Heart right ventricle (tissue), 16 donors: ENCODE measurements at regions of chr13 and their contacts with region 1.

Region 1: DNA sequence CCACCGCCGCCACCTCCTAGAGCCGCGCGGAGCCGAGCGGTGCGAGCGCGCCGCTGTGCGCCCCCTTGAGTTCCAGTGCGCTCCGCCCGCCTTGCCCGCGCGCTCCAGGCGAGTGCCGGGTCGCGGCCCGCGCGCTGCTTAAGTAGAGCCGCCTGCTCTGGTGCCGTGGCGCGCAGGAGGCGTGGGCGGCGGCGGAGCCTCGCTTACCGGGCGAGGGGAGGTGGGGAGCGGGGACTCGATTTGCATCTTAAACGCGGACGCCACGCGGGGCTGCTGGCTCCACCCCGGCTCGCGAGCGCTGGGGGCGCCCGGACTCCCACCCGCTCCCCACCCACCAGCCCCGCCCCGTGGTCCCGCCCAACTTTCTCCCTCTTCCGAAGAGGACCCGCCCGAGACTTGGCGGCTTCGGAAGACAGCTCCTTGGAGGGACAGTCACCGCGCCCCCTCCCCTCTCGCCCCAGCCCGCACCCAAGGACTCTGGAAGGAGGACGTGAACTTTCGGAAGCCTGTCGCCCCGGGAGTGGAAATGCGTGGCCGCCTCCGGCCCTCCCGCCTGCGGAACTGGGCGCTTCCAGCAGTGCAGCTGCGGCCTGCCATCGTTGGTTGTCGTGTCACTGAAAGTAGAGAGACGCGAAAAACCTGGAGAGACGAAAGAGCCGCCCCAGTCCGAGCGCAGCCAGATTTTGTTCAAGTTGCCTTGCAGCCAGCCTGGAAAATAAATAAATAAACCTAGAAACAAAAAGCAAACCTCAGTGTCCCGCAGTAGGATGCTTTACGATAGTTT is at the start of gene KCTD12:
- DNase-seq: peak; percentile 90 to 93
- ATAC-seq: peak; percentile 80 to 95 (median 84)
- H3K4me3 ChIP-seq: peak within 1 kb of the TSS; percentile 61 to 90 (median 84)
- H3K27ac ChIP-seq: peak within 1 kb of the TSS; percentile 88 to 97 (median 94)
- H3K4me1 ChIP-seq: peaks cover 0 to 44% (median 18%) of the 10 kb centered on the region in 9 donors
- H3K27me3 ChIP-seq: peaks cover 0 to 6% (median 0%) of the 10 kb centered on the region in 7 donors
- CTCF ChIP-seq: peak in 7 of 9 donors; percentile 20 to 67 (median 42)
- total RNA-seq, gene KCTD12: 21.0 to 56.5 (median 32.5) TPM

Region 2: DNA sequence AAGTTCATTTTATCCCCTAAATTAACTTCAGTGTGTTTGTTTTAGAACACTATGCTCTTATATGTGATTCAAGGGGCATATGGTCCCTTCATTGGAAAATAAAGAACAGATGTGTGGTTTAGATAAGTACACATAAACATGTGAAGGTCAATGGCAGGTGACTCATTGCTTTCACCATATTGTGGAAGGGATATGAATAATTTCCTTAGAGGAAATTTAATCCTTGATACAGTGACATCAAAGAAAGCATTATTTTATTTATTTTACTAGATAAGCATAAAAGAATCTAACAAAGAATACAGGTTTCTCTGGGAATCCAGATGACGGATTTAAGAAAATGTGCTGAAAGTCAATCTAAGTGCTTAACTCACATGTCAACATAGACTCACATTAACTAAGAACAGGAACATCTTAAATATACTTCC is 373.8 kb before region 1 on chr13:
- intact Hi-C with region 1: loop called in 1 of 10 experiments (anchors 5 kb)
- DNase-seq: peak in 1 of 2 donors; percentile 9
- ATAC-seq: peak; percentile 38 to 94 (median 82)
- H3K4me3 ChIP-seq: no peak overlapping the region
- H3K27ac ChIP-seq: peak overlapping the region in 4 of 10 donors; percentile 7 to 52 (median 21)
- H3K4me1 ChIP-seq: peaks cover 0 to 17% (median 0%) of the 10 kb centered on the region in 9 donors
- H3K27me3 ChIP-seq: no peaks in the 10 kb centered on the region
- CTCF ChIP-seq: no peak

Region 3: GRCh38 chr13:76667551-76667950 is 218.9 kb before region 1 on chr13:
- intact Hi-C with region 1: loop called in 4 of 10 experiments (anchors 5 kb)
- DNase-seq: peak in 1 of 2 donors; percentile 32
- ATAC-seq: peak in 7 of 8 donors; percentile 62 to 83 (median 72)
- H3K4me3 ChIP-seq: no peak overlapping the region
- H3K27ac ChIP-seq: no peak overlapping the region
- H3K4me1 ChIP-seq: peaks cover 0 to 17% (median 0%) of the 10 kb centered on the region in 9 donors
- H3K27me3 ChIP-seq: no peaks in the 10 kb centered on the region
- CTCF ChIP-seq: peak in 8 of 9 donors; percentile 18 to 66 (median 52)

Region 4: DNA sequence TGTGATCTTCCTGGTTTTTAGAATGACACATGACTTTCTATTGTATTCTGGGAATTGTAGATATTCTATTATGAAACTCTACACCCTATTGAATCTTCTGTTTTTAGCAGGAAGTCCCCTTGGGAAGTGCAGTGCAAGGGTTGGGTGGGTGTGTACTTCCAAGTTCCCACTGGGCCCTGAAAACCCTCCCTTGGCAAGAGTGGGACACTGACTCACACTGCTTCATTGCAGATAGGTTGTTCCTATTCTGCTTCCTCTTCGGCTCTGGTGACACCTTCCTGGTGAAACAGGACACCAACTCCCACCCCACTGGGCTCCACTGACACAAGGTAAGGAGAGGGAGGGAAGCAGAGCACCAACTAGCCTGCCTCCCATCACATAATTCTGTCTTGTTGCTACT is 122.1 kb before region 1 on chr13:
- intact Hi-C with region 1: loop called in 2 of 10 experiments (anchors 10 kb)
- DNase-seq: peak; percentile 32 to 86
- ATAC-seq: peak; percentile 93 to 99 (median 98)
- H3K4me3 ChIP-seq: peak overlapping the region in 7 of 10 donors; percentile 10 to 39 (median 25)
- H3K27ac ChIP-seq: peak overlapping the region; percentile 59 to 85 (median 78)
- H3K4me1 ChIP-seq: peaks cover 0 to 32% (median 25%) of the 10 kb centered on the region in 9 donors
- H3K27me3 ChIP-seq: no peaks in the 10 kb centered on the region
- CTCF ChIP-seq: no peak

Region 5: DNA sequence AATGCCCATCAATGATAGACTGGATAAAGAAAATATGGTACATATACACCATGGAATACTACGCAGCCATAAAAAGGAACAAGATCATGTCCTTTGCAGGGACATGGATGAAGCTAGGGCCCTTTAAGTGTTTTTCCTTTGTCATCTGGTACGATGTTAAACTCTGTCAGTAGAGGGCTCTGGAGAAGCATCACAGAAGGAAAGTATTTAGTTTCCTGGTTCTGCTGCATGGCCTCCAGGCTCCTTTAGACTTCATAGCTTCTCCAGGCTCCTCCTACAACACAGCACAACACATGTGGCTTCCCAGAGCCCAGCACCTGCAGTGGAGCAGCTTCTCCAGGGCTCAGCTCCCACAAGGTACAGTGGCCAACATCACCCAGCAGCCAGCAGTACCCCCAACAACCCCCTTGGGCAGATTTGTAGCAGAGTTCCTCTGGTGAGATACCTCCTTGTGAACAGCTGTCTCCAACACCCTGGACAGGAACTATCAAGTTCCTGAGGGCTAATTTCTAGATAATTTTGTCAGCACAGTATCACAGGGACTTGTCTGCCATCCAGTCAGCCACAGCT is 63.7 kb before region 1 on chr13:
- intact Hi-C with region 1: loop called in 8 of 10 experiments (anchors 2 to 10 kb)
- DNase-seq: no peak
- ATAC-seq: peak in 6 of 8 donors; percentile 30 to 71 (median 53)
- H3K4me3 ChIP-seq: no peak overlapping the region
- H3K27ac ChIP-seq: peak overlapping the region in 2 of 10 donors; percentile 21 to 52
- H3K4me1 ChIP-seq: peaks cover 0 to 22% (median 0%) of the 10 kb centered on the region in 9 donors
- H3K27me3 ChIP-seq: no peaks in the 10 kb centered on the region
- CTCF ChIP-seq: peak in 7 of 9 donors; percentile 18 to 56 (median 42)